ENCODE measurements at regions of chr12 and their contacts with region 1.

Region 1: DNA sequence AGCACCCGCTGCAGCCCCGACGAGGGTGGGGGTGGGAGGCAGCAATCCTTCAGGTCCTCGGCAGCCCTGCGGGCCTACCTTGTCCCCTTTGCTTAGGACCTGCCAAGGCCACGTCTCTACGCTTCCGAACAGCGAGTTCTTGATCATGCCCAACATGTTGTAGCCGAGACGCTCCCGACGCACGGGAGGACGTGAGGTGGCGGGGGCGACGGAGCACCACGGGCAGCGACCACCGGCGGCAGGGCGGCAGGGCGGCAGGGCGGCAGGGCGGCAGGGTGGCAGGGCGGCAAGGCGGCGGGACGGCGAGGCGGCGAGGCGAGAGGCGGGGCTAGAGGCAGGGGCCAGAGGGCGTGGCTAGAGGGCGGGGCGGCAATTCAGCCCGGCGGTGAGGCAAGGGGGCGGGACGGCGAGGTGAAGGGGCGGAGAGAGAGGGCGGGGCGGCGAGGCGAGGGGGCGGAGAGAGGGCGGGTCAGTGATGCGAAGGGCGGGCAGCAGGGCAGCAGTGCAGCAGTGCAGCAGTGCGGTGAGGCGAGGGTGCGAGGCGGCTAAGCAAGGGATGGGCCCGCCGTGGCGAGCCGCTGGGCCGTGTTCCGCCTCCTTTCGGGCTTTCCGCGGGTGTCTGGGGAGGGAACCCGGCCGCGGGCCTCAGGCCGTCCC is at the start of gene HEBP1:
- DNase-seq: peak; percentile 98
- H3K4me3 ChIP-seq: peak within 1 kb of the TSS; percentile 48 to 78 (median 63)
- H3K27ac ChIP-seq: peak within 1 kb of the TSS; percentile 90 to 95 (median 94)
- H3K4me1 ChIP-seq: peaks cover 0 to 36% (median 21%) of the 10 kb centered on the region in 4 donors
- H3K27me3 ChIP-seq: no peaks in the 10 kb centered on the region
- CTCF ChIP-seq: peak in 1 of 5 experiments; percentile 2
- EP300 ChIP-seq: no peak
- POLR2A ChIP-seq: peak; percentile 94
- total RNA-seq, gene HEBP1: 10.3 to 74.4 (median 37.4) TPM

Region 2: DNA sequence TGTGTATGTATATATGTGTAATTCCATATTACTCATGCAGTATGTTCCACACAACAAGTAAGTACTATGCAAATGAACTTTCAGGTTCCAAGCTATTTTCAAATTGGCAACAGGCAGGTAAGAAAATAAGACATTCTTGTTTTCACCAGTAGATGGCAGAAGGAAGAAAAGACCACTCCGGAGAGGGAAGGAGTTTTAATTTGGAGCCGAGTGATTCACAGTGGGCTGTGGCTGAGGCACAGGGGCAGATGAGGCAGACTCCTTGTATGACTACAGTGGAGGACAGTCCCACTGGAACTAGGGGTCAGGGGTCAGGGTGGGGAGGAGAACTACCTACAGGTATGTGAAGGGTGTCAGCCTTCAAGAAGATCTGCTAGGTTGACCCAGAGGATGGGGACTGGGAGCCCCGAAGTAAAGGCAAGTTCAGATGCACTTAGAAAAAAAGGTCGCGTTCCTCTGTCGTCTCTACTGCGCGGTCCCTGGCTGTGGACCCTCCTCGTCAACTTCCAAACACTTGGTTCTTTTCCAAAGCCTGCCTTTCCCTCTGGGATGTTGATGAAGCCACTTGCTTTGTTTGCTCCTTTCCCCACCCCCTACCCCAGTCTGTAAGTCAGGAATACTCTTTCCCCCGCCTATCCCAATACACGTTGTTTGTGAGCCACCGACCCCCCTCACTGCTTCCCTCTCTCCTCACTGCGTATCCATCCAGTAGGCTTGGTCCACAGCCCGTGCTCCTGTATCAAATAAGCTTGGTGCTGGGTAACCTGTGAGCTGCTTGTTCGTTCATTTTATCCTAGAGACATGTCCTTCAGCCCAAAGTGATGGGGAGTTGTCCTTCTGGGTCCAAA is 162.8 kb before region 1 on chr12:
- in situ Hi-C with region 1: loop called in 1 of 4 experiments (anchors 25 kb)
- intact Hi-C with region 1: no loop called
- DNase-seq: peak; percentile 72
- H3K4me3 ChIP-seq: no peak overlapping the region
- H3K27ac ChIP-seq: peak overlapping the region in 1 of 4 donors; percentile 39
- H3K4me1 ChIP-seq: peaks cover 4 to 39% (median 16%) of the 10 kb centered on the region in 4 donors
- H3K27me3 ChIP-seq: no peaks in the 10 kb centered on the region
- CTCF ChIP-seq: peak; percentile 52 to 78 (median 59)
- EP300 ChIP-seq: no peak
- POLR2A ChIP-seq: peak; percentile 11

Region 3: GRCh38 chr12:12954356-12954755 is 45.7 kb before region 1 on chr12:
- in situ Hi-C with region 1: no loop called
- intact Hi-C with region 1: no loop called
- DNase-seq: no peak
- H3K4me3 ChIP-seq: no peak overlapping the region
- H3K27ac ChIP-seq: no peak overlapping the region
- H3K4me1 ChIP-seq: no peaks in the 10 kb centered on the region
- H3K27me3 ChIP-seq: no peaks in the 10 kb centered on the region
- CTCF ChIP-seq: no peak
- EP300 ChIP-seq: no peak
- POLR2A ChIP-seq: no peak

Region 4: DNA sequence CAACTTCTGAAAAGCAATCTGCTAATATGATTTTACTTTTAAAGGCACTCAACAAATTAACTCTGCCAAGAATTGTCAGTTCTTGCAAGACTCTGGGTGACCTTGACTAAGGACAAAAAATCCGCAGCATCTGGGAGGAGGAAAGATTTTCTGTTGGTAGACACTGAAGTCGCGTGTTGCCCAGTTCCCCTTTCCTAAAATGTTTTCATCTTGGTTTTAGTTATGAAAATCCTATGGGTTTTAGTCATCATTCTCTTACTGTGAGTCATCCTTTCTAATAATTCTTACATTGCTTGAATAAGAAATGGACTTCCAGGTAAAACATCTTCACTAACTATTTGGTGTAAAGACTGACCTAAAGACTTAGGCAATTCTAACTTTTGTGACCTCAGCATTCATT is 94.3 kb after region 1 on chr12:
- in situ Hi-C with region 1: loop called in 1 of 4 experiments (anchors 10 kb)
- intact Hi-C with region 1: no loop called
- DNase-seq: no peak
- H3K4me3 ChIP-seq: no peak overlapping the region
- H3K27ac ChIP-seq: no peak overlapping the region
- H3K4me1 ChIP-seq: peaks cover 6 to 24% (median 15%) of the 10 kb centered on the region in 4 donors
- H3K27me3 ChIP-seq: no peaks in the 10 kb centered on the region
- CTCF ChIP-seq: no peak
- EP300 ChIP-seq: no peak
- POLR2A ChIP-seq: no peak

Region 5: DNA sequence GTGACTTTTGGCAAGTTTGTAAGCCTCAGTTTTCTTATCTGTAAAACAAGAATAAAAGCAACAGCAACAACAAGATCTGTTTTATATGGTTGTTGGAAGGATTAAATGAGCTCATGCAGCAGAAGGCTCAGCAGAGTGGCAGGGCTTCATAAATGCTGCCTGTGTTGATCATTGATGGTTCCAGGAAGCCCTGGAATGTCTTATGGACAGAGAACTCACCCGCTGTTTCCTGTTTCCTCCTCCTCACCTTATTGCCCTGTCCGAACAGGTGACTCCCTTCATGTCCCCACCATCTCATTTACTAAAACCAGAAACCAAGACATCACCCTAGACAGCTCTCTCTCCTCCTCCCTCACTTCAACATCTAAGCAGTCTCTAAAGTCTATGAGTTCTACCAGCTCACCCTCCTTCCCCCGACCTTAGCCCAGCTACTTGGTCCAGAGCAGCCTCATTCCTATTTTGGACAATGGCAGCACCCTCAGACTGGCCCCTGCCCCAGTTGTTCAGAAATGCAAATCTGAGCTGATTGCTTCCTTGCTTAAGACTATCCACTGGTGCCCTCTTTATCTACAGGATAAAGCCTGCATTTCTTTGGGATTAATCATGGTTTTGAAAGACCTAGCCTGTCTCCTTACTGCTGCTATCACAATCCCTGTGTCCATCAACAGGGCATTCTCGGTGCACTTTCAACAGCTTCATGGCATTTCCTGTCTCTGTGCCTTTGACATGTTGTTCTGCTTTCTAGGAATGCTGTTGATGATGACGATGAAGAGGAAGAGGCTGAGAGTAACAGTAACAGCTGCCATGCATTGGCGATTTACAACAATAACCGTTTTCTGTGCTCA is 124.8 kb after region 1 on chr12:
- in situ Hi-C with region 1: no loop called
- intact Hi-C with region 1: no loop called
- DNase-seq: no peak
- H3K4me3 ChIP-seq: no peak overlapping the region
- H3K27ac ChIP-seq: no peak overlapping the region
- H3K4me1 ChIP-seq: no peaks in the 10 kb centered on the region
- H3K27me3 ChIP-seq: peaks cover 7% of the 10 kb centered on the region
- CTCF ChIP-seq: no peak
- EP300 ChIP-seq: no peak
- POLR2A ChIP-seq: no peak

Measured in transverse colon (tissue), 4 donors.